Esophagus squamous epithelium (tissue), 5 donors: ENCODE measurements at regions of chr1 and their contacts with region 1.

Region 1: DNA sequence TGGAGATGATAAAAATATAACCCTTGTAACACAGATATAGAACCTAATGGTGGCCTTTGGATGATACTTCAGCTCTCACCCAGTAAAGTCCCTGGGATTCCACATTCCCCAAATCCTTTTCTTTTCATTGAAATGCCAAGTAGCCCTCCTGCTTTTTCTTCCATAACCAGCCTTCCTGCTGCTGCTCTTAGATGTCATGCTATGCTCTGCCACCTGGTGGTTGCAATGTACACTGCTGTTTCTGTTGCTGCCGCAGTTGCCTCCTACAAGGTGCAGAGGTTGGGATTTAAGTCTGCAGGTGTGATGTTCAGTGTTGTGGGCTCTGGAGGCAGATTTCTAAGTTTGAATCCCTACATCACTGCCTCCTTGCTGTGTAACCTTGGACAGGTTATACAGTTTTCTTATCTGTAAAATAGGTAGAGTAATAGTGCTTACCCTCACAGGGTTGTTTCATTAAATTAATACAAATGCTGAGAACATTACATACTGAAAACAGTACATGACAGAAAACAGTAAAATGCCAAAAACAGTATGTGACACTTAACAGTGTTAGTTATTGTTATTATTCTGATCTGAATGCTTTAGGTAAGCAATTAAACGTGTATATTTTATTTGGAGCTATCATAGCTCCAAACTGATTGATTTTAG is 64.3 kb downstream of the CAMSAP2 start:
- DNase-seq: peak; percentile 1
- H3K4me3 ChIP-seq: no peak overlapping the region
- H3K27ac ChIP-seq: no peak overlapping the region
- H3K4me1 ChIP-seq: peaks cover 0 to 12% (median 0%) of the 10 kb centered on the region in 3 donors
- H3K27me3 ChIP-seq: no peaks in the 10 kb centered on the region
- CTCF ChIP-seq: peak; percentile 74 to 95 (median 94)
- POLR2A ChIP-seq: no peak

Region 2: DNA sequence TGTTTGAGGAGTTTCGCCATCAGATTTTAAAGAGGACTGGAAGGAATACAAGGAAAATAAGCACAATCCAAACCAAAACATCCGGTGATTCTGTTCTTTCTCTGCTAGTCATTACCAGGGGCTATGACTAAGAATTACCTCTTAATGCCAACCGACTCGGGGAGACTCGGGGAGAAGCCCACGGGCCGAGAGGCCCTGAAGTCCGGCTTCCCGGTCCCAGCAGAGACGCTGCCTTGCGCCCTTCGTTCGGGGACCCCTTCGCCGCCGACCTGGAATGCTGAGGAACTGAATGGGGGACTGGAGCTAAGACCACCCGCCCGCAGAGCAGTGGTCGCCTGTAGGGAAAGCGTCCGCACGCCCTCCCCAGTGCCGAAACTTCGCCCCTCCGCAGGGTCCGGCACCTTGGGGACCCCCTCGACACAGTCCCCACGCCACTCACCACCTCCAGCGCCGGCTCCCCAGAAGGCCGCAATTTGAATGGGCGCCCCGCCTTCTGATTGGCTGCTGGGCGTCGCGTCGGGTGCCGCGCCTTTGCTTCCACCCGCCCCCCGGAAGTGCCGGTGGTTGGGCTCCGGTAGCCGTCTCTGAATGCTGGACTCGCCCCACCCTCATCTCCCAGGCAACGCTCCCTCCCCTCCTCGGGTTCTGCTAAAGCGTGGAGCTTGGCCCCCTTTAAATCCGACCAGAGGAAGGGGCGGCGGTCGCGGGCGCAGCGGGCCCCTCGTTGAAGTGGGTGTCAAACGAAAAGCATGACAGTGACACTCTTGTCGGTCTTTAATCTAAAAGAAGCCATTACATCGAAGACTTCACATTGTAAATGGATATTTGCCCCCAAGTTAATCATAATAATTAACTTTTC is 182.5 kb before region 1 on chr1 and contains the start of gene KIF14:
- intact Hi-C with region 1: loop called (anchors 10 kb)
- DNase-seq: peak; percentile 59
- H3K4me3 ChIP-seq: peak within 1 kb of the TSS; percentile 42 to 77 (median 62)
- H3K27ac ChIP-seq: peak within 1 kb of the TSS; percentile 64 to 81 (median 77)
- H3K4me1 ChIP-seq: peaks cover 0 to 39% (median 9%) of the 10 kb centered on the region in 3 donors
- H3K27me3 ChIP-seq: no peaks in the 10 kb centered on the region
- CTCF ChIP-seq: no peak
- POLR2A ChIP-seq: peak in 1 of 4 donors; percentile 32
- total RNA-seq, gene KIF14: 1.5 to 5.8 (median 3.1) TPM